RWPE1 (cell line): ENCODE measurements at regions of chr19 and their contacts with region 1.

Region 1: DNA sequence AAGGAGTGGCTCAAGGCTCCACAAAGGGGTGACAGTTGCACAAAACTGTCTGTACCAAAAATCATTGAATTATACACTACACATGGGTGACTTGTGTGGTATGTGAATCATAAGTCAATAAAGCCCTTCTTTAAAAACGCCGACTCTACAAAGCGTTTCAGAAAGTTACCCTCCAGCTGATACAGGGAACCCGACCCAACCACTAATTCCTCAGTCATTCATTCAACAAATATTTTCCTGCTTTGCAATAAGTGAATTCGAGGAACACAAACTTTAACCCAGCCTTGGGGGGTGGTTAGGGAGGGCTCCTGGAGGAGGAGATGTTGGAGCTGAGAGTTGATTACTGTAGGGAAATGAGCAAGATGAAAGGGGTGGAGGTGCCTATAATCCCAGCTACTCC is 32.0 kb downstream of the LTBP4 start:
- DNase-seq: no peak
- H3K27ac ChIP-seq: no peak overlapping the region
- CTCF ChIP-seq: no peak

Region 2: DNA sequence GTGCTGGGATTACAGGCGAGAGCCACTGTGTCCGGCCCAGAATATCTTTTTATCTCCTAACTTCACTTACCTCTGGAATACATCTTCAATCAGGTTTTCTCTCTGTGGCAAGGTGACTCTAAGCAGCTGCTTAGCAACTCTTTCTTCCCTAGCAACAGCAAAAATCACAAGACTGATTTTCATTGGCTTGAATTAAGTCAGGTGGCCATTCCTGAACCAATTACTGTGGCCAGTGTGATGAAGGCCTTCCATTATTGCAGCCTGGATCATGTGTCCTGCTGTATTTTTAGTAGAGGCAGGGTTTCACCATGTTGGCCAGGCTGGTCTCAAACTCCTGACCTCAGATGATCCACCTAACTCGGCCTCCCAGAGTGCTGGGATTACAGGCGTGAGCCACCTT is 41.0 kb before region 1 on chr19:
- CTCF ChIA-PET with region 1: no interaction called
- POLR2A ChIA-PET with region 1: no interaction called
- DNase-seq: no peak
- H3K27ac ChIP-seq: peak overlapping the region; percentile 48; the same call in 1 of the 2 replicates
- CTCF ChIP-seq: no peak

Region 3: GRCh38 chr19:40609561-40610395 is 23.4 kb before region 1 on chr19:
- CTCF ChIA-PET with region 1: interaction called, 18 read pairs
- POLR2A ChIA-PET with region 1: no interaction called
- DNase-seq: peak; percentile 95
- H3K27ac ChIP-seq: peak overlapping the region; percentile 96
- CTCF ChIP-seq: no peak

Region 4: GRCh38 chr19:40614622-40615411 is 18.4 kb before region 1 on chr19:
- CTCF ChIA-PET with region 1: interaction called, 18 read pairs
- POLR2A ChIA-PET with region 1: no interaction called
- DNase-seq: peak; percentile 85
- H3K27ac ChIP-seq: peak overlapping the region; percentile 96
- CTCF ChIP-seq: no peak

Region 5: GRCh38 chr19:40705362-40705651 is 72.1 kb after region 1 on chr19:
- CTCF ChIA-PET with region 1: no interaction called
- POLR2A ChIA-PET with region 1: no interaction called
- DNase-seq: no peak
- H3K27ac ChIP-seq: no peak overlapping the region
- CTCF ChIP-seq: no peak